ENCODE measurements at regions of chr15 and their contacts with region 1.

Region 1: DNA sequence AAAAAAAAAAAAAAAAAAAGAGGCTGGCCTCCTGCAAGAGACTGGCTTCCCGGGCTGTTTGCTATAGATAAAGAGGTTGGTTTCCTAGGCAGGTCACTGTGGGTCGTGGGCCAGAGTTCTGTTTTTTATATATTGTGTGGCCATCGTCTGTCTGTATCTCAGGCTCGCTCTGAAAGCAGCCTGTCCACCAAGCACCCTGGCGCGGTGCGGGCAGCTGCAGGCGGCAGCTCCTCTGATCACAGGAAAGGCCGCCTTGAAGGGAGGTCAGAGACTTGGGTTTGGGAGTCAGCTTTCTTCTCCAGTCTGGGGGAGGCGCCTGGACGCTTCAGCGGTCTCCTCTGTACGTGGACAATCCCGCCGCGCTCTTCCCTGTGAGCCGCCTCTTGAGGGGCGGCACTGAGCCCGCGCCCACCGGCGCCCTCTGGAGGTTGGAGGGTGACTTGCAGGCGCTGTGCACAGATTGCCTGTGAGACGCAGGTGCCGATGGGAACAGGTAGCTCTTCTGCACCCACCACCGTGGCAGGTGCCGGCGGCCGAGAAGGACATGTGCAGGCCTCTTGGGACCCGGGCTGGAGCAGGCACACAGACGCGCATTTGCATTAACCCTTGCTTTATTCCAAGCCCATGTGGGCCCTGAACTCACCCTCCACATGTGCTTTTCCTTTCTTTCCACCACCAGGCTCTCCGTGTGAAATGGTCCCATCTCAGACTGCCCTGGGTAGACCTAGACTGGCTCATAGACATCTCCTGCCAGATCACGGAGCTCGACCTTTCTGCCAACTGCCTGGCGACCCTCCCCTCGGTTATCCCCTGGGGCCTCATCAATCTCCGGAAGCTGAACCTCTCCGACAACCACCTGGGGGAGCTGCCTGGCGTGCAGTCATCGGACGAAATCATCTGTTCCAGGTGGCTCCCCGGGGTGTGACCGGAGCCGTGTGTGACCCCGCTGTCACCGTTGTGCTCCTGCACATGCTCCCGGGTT is 89.3 kb downstream of the LRRK1 start:
- DNase-seq: peak; percentile 87 to 89
- ATAC-seq: peak; percentile 86 to 92
- H3K4me3 ChIP-seq: peak overlapping the region; percentile 55
- H3K27ac ChIP-seq: peak overlapping the region; percentile 81 to 82
- H3K4me1 ChIP-seq: peaks cover 13% of the 10 kb centered on the region; the same call in 2 of the 3 replicates
- CTCF ChIP-seq: peak; percentile 94
- EP300 ChIP-seq: no peak
- POLR2A ChIP-seq: peak; percentile 52
- RAD21 ChIP-seq: peak; percentile 58 to 59

Region 2: GRCh38 chr15:100605296-100605695 is 403.2 kb before region 1 on chr15:
- CTCF ChIA-PET with region 1: interaction called, 32 read pairs
- POLR2A ChIA-PET with region 1: no interaction called
- DNase-seq: no peak
- ATAC-seq: no peak
- H3K4me3 ChIP-seq: no peak overlapping the region
- H3K27ac ChIP-seq: no peak overlapping the region
- H3K4me1 ChIP-seq: peaks cover 18% of the 10 kb centered on the region
- CTCF ChIP-seq: no peak
- EP300 ChIP-seq: no peak
- POLR2A ChIP-seq: no peak
- RAD21 ChIP-seq: no peak

Region 3: GRCh38 chr15:100650685-100651084 is 357.8 kb before region 1 on chr15:
- CTCF ChIA-PET with region 1: interaction called, 35 read pairs
- POLR2A ChIA-PET with region 1: no interaction called
- DNase-seq: peak; percentile 21 to 34
- ATAC-seq: peak in 1 of 2 experiments; percentile 60; a peak in 2 of 6 replicates
- H3K4me3 ChIP-seq: no peak overlapping the region
- H3K27ac ChIP-seq: no peak overlapping the region
- H3K4me1 ChIP-seq: no peaks in the 10 kb centered on the region
- CTCF ChIP-seq: peak; percentile 39
- EP300 ChIP-seq: no peak
- POLR2A ChIP-seq: no peak
- RAD21 ChIP-seq: peak; percentile 25 to 31; a peak in 3 of 5 replicates

Region 4: DNA sequence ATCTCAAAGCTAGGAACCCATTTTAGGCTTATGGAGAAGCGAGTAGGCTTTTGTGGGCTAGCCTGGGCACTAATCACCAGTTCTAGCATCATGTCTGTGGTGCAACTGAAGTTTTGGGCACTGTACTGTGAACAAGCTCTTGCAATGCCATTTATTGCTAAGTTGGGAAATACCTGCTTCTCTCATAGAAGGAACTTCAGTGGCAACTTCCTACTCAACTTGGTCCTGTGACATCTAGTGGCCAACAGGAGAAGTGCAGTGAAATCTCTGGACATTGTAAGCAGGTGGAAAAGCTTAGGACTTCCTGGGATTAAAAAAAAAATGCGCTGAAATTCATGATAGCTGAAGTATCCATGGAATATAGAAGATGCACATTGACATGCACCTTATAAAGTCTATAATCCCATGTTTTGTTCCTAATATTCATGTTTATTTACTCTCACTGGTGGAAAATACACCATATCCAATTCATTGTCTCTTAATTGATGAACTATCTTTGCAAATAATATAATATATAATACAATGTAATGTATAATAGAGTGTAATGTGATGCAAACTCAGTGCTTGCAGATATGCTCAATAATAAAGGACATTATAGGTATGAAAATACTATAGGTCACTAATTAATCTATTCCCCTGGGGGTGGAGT is 135.3 kb before region 1 on chr15:
- CTCF ChIA-PET with region 1: interaction called, 36 read pairs
- POLR2A ChIA-PET with region 1: no interaction called
- DNase-seq: peak; percentile 88 to 91
- ATAC-seq: peak; percentile 72 to 87
- H3K4me3 ChIP-seq: no peak overlapping the region
- H3K27ac ChIP-seq: no peak overlapping the region
- H3K4me1 ChIP-seq: no peaks in the 10 kb centered on the region
- CTCF ChIP-seq: peak; percentile 91
- EP300 ChIP-seq: no peak
- POLR2A ChIP-seq: no peak
- RAD21 ChIP-seq: peak; percentile 80 to 89

Region 5: GRCh38 chr15:100934726-100935125 is 73.7 kb before region 1 on chr15:
- CTCF ChIA-PET with region 1: interaction called, 950 read pairs
- POLR2A ChIA-PET with region 1: no interaction called
- DNase-seq: peak in 1 of 2 experiments; percentile 58
- ATAC-seq: peak; percentile 85 to 88
- H3K4me3 ChIP-seq: no peak overlapping the region
- H3K27ac ChIP-seq: peak overlapping the region in 1 of 2 experiments; percentile 29; a peak in 2 of 6 replicates
- H3K4me1 ChIP-seq: peaks cover 9% of the 10 kb centered on the region; the same call in 2 of the 3 replicates
- CTCF ChIP-seq: peak; percentile 7; the same call in 1 of the 3 replicates
- EP300 ChIP-seq: no peak
- POLR2A ChIP-seq: no peak
- RAD21 ChIP-seq: peak in 1 of 2 experiments; percentile 41; a peak in 2 of 5 replicates

Region 6: GRCh38 chr15:100987143-100987542 is 21.3 kb before region 1 on chr15:
- CTCF ChIA-PET with region 1: interaction called, 76 read pairs
- POLR2A ChIA-PET with region 1: no interaction called
- DNase-seq: peak in 1 of 2 experiments; percentile 21
- ATAC-seq: peak; percentile 52 to 61; a peak in 4 of 6 replicates
- H3K4me3 ChIP-seq: no peak overlapping the region
- H3K27ac ChIP-seq: peak overlapping the region; percentile 32 to 74; a peak in 5 of 6 replicates
- H3K4me1 ChIP-seq: peaks cover 23% of the 10 kb centered on the region
- CTCF ChIP-seq: no peak
- EP300 ChIP-seq: no peak
- POLR2A ChIP-seq: no peak
- RAD21 ChIP-seq: no peak

Region 7: DNA sequence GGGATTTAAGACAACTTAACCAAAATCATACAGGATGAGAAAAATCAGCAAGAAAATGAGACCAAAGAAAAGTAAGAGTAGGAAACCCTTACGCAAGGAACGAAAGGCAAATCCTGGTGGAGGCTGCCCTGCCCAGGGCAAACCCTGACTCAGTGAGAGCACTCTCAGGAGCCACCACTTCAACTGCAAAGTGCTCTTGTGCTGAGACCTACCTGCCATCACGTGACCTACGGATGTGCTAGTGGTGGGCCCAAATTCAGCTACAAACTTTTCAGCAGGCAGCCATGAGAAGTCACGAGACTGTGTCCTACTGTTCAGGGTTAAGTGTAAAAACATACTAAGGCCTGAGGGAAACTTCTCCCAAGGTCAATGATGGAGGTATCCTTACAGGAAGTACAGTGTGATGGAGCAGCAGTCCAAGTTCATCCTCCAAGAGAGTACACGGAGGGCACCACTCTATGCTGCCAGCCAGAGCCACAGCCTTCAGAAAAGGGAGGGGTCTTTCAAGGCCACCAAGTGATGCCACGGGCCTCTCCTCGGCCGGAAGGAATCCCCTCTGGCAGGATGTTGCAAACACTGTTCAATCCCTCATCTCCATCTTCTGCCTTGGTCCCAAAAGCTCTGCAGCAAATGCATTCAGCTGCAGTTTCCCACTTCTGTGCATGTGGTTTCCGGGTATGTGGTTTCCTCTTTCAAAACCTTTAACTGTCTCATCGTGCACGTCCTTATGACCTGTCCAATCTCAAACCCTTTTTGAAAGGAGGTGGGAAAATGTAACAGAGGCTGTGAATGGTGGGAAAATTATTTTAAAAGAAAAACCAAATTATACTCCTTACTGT is 233.9 kb after region 1 on chr15:
- CTCF ChIA-PET with region 1: interaction called, 11 read pairs
- POLR2A ChIA-PET with region 1: no interaction called
- DNase-seq: no peak
- ATAC-seq: peak in 1 of 2 experiments; percentile 30; a peak in 2 of 6 replicates
- H3K4me3 ChIP-seq: no peak overlapping the region
- H3K27ac ChIP-seq: no peak overlapping the region
- H3K4me1 ChIP-seq: no peaks in the 10 kb centered on the region
- CTCF ChIP-seq: no peak
- EP300 ChIP-seq: no peak
- POLR2A ChIP-seq: no peak
- RAD21 ChIP-seq: no peak

Measured in A549 (cell line).